GM10248 (cell line): ENCODE measurements at regions of chr10 and their contacts with region 1.

Region 1: DNA sequence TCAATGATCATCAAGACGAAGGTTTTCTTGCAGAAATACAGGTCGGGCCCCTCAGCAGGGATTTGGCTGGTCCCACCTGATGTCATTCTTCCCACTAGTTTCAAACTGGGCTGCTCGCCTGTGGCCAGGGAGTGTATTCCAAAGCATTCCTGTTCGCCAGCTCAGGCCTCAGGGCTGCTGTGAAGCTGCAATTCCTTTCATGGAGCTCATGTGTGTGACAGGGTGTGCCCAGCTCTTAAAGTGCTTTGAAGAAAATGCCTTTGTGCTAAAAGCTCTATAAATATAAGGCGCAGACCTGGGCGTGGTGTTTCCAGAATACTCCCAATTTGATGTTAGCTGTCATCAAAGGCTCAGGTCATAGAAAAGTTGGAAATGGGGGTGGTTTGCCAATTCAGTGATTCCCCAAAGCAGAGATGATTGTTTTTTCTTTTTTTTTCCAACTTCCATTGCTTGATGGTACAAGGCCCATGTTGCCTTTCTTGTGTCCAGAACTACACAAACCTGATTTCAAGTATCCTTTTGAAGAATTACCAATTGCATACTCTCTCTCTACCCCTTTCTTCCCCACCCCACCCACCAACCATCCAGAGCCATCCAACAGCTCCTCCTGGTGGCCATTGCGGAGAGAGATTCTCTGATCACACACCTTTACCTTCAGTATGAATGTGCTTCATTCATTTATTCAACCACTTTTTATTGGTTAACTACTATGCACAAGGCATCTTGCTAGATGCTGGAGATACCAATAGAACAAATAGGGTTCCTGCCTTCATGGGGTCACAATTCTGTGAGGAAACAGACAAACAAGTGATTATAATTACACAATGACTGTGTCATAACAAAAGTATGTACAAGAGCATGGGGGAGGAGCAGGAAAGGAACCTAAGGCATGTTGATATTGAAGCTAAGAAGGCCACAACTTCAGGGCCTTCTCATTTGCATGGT is 297.3 kb upstream of the LYZL1 start:
- DNase-seq: peak; percentile 30
- CTCF ChIP-seq: peak; percentile 48

Region 2: GRCh38 chr10:29001801-29002200 is 10.2 kb after region 1 on chr10:
- CTCF ChIA-PET with region 1: interaction called, 12 read pairs
- POLR2A ChIA-PET with region 1: no interaction called
- DNase-seq: no peak
- CTCF ChIP-seq: no peak